Ascending aorta (tissue), 2 donors: ENCODE measurements at regions of chr16 and their contacts with region 1.

Region 1: GRCh38 chr16:4271176-4272066 is 1.4 kb downstream of the TFAP4 start:
- DNase-seq: peak; percentile 68 to 95
- H3K4me3 ChIP-seq: peak overlapping the region; percentile 94 to 97
- H3K27ac ChIP-seq: peak overlapping the region; percentile 59 to 86
- H3K4me1 ChIP-seq: peaks cover 0 to 12% of the 10 kb centered on the region in 2 donors
- H3K27me3 ChIP-seq: no peaks in the 10 kb centered on the region
- CTCF ChIP-seq: no peak

Region 2: GRCh38 chr16:4288148-4288921 is 16.9 kb after region 1 on chr16:
- intact Hi-C with region 1: loop called (anchors 2 kb)
- DNase-seq: peak in 1 of 2 donors; percentile 83
- H3K4me3 ChIP-seq: no peak overlapping the region
- H3K27ac ChIP-seq: no peak overlapping the region
- H3K4me1 ChIP-seq: peaks cover 4 to 17% of the 10 kb centered on the region in 2 donors
- H3K27me3 ChIP-seq: no peaks in the 10 kb centered on the region
- CTCF ChIP-seq: peak; percentile 91 to 97 (median 92)

Region 3: DNA sequence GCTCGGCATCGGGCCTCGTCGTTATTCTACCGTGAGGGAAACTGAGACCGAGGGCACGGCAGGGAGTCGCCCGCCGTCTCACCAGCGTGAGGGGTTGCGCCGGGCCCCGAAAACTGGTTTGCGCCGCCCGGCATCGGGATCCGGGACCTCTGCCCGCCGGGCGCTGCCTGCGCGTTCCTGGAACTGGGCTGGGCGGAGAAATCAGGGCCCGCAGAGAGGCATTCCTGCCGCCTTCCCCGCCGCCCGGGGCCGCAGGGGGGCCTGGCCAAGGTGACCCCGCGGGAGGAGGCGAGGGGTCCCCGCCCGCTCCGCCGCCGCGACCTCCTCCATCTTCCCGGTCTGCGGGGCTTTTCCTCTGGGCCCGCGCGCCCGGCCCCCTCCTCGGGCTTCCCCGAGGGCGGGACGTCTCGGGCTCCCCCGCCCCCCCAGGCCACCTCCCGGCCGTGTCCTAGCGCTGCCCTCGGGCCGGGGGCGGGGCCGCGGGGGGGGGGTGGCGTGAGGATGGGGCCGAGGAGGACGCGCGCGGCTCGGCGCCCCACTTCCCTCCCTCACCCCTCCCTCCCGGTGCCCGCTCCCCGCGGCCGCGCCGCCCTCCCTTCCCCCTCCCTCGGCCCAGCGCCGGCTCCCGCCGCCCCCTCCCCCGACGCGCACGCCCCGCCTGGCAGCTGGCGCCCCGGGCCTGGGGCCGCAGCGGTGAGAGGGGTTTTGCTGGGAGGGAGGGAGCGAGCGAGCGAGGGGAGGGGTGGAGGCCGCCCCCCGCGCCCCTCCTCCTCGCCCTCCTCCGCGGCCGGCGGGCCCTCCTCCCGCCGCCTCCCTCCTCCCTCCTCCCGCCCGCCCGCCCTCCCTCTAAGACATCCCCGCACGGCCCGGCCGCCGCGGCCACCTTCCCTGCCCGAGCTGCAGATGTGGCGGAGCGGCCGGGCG is 44.0 kb after region 1 on chr16 and contains the start of gene GLIS2:
- intact Hi-C with region 1: loop called (anchors 5 kb)
- DNase-seq: peak in 1 of 2 donors; percentile 84
- H3K4me3 ChIP-seq: peak within 1 kb of the TSS; percentile 75 to 90
- H3K27ac ChIP-seq: peak within 1 kb of the TSS; percentile 94 to 97
- H3K4me1 ChIP-seq: peaks cover 22 to 33% of the 10 kb centered on the region in 2 donors
- H3K27me3 ChIP-seq: no peaks in the 10 kb centered on the region
- CTCF ChIP-seq: no peak
- total RNA-seq, gene GLIS2: 16.8 TPM

Region 4: DNA sequence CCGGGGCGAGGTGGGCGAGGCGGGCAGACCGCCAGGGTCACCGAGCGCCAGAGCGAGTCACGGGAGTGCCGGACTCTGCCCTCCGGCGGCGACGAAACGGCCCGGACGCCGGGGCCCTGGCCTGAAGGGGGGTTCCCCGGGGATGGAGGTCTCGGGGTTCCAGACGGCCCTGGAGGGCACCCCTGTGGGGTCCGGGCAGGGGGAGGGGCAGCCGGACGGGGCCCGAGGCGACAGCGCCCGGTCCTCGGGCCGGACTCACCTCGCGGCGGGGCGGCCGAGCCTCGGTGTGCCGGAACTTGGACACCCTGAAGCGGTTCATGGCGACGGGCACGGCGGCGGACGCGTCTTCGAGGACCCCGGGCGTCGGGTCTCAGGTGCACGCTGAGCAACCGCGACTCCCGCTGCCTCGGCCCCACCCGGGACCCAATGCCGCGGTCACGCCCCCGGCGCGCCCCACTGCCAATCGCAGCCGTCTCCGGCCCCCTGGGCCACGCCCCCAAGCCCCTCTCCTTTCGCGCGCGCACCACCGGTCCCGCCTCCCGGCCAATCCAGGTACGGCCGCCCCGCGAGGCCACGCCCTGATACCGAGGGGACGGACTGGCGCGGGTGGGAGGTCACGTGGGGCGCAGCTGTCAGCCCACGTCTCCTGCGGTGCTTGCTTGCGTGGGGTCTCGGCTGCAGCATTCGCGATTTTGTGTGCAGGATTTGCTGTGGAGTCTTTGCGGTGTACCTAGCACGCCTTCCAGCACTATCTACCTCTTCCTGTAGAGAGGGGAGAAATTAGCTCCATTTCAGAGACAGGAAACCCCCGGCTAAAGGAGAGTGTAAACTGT is 145.0 kb after region 1 on chr16 and contains the start of gene CORO7:
- intact Hi-C with region 1: loop called (anchors 5 kb)
- DNase-seq: peak; percentile 87 to 98
- H3K4me3 ChIP-seq: peak within 1 kb of the TSS; percentile 65 to 83
- H3K27ac ChIP-seq: peak within 1 kb of the TSS; percentile 49 to 67
- H3K4me1 ChIP-seq: peaks cover 0 to 9% of the 10 kb centered on the region in 2 donors
- H3K27me3 ChIP-seq: no peaks in the 10 kb centered on the region
- CTCF ChIP-seq: peak in 1 of 3 experiments; percentile 3
- total RNA-seq, gene CORO7: 41.9 TPM